Activated CD4-positive, alpha-beta memory T cell treated with anti-CD3 and anti-CD28 coated beads for 36 hours (primary cell): ENCODE measurements at regions of chr17 and their contacts with region 1.

Region 1: GRCh38 chr17:4143563-4144421 is 795 bp downstream of the CYB5D2 start:
- DNase-seq: peak; percentile 93
- H3K4me3 Mint-ChIP-seq: peak overlapping the region; percentile 96
- H3K27ac Mint-ChIP-seq: peak overlapping the region; percentile 99
- H3K4me1 Mint-ChIP-seq: peaks cover 40% of the 10 kb centered on the region
- H3K27me3 Mint-ChIP-seq: no peaks in the 10 kb centered on the region

Region 2: DNA sequence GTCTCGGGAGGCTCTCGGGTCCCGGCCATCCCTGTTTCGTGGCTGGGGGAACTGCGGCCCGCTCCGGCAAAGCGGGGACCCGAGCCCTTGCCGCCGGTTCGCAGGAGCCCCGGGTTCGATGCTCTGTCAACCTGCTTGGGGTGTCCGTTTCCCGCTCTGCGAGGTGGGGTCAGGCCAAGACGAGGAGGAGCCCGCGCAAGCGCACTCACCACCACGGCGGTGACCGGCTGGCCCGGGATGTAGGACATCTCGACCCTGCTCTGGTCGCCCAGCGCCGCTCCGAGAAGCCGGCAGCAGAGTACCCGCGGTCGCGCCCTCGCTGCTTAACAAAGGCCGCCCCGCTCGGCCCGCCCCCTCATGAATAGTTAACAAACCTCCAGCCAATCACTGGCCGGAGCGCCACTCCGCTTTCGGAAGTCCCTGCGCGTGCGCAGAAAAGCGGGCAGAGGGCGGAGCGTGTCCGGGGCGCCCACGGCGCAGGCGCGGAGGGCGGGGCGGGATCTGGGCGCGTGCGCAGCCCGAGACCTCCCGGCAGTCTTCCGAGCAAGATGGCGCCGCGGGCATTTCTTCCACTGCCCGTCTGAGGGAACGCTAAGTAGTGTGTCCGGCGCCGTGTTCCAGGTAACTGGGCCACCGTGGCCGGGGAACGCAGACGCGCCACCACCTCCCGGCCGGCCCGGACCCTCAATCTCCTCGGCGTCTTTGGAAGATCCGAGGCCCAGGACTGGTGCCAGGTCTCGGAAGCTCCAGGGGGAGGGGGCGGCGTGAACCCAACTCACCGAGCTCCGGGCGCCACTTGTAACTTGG is 475.3 kb before region 1 on chr17 and contains the starts of genes EMC6 and TAX1BP3:
- CTCF ChIA-PET with region 1: no interaction called
- POLR2A ChIA-PET with region 1: no interaction called
- intact Hi-C with region 1: no loop called
- DNase-seq: peak; percentile 99
- H3K4me3 Mint-ChIP-seq: peak within 1 kb of the TSS; percentile 94
- H3K27ac Mint-ChIP-seq: peak within 1 kb of the TSS; percentile 72
- H3K4me1 Mint-ChIP-seq: peaks cover 17% of the 10 kb centered on the region
- H3K27me3 Mint-ChIP-seq: no peaks in the 10 kb centered on the region
- total RNA-seq, gene EMC6: 49.3 to 55.4 TPM
- total RNA-seq, gene TAX1BP3: 23.7 to 24.5 TPM

Region 3: DNA sequence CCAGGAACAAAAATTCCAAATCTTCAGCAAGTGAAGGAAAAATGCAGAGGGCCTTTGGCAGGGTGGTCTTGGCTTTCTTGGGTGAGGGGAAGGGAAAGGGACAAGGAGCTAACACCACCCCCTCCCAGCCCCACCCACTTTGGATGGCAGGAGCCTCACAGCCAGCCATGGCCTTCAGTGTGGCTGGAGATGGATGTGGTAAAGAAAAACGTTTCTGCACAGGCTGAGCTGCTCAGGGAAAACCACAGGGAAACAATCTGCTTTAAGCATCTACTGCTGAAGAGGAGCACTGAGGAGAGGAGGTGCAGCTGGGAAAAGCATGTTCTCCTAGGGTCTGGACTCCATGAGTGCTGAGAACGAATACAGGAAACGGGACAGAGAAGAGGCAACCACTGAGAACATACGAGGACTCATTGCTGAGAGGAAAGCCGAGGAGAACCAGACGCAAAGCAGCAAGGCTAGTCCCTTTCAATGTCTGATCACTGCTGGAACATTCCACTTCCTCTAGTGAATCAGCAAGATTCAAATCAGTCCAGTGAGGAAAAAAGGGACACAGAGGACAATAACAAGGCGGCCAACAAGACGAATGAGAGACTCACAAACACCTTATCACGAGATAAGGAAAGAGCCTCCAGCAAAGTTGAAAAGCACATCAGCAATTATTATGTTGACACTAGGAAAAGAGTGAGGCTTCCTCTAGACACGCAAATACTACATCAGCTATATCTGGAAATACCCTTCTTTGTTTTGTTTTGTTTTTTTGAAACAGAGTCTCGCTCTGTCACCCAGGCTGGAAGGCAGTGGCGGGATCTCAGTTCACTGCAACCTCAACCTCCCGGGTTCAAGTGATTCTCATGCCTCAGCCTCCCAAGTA is 42.7 kb before region 1 on chr17:
- CTCF ChIA-PET with region 1: no interaction called
- POLR2A ChIA-PET with region 1: interaction called, 12 read pairs
- intact Hi-C with region 1: no loop called
- DNase-seq: peak; percentile 25
- H3K4me3 Mint-ChIP-seq: peak overlapping the region; percentile 5
- H3K27ac Mint-ChIP-seq: peak overlapping the region; percentile 73
- H3K4me1 Mint-ChIP-seq: peaks cover 22% of the 10 kb centered on the region
- H3K27me3 Mint-ChIP-seq: no peaks in the 10 kb centered on the region

Region 4: GRCh38 chr17:4161179-4161559 is 17.4 kb after region 1 on chr17:
- CTCF ChIA-PET with region 1: interaction called, 3 read pairs
- POLR2A ChIA-PET with region 1: interaction called, 24 read pairs
- intact Hi-C with region 1: no loop called
- DNase-seq: no peak
- H3K4me3 Mint-ChIP-seq: no peak overlapping the region
- H3K27ac Mint-ChIP-seq: peak overlapping the region; percentile 59
- H3K4me1 Mint-ChIP-seq: peaks cover 10% of the 10 kb centered on the region
- H3K27me3 Mint-ChIP-seq: no peaks in the 10 kb centered on the region

Region 5: GRCh38 chr17:4366327-4367063 is 222.7 kb after region 1 on chr17 and contains the start of gene UBE2G1:
- CTCF ChIA-PET with region 1: no interaction called
- POLR2A ChIA-PET with region 1: no interaction called
- intact Hi-C with region 1: loop called (anchors 1 kb)
- DNase-seq: peak; percentile 100
- H3K4me3 Mint-ChIP-seq: peak within 1 kb of the TSS; percentile 73
- H3K27ac Mint-ChIP-seq: peak within 1 kb of the TSS; percentile 91
- H3K4me1 Mint-ChIP-seq: peaks cover 33% of the 10 kb centered on the region
- H3K27me3 Mint-ChIP-seq: no peaks in the 10 kb centered on the region
- total RNA-seq, gene UBE2G1: 54.4 to 57.6 TPM

Region 6: GRCh38 chr17:4709794-4710692 is 566.3 kb after region 1 on chr17 and contains the start of gene ARRB2:
- CTCF ChIA-PET with region 1: no interaction called
- POLR2A ChIA-PET with region 1: no interaction called
- intact Hi-C with region 1: loop called (anchors 10 kb)
- DNase-seq: peak; percentile 99
- H3K4me3 Mint-ChIP-seq: peak within 1 kb of the TSS; percentile 98
- H3K27ac Mint-ChIP-seq: peak within 1 kb of the TSS; percentile 94
- H3K4me1 Mint-ChIP-seq: peaks cover 55% of the 10 kb centered on the region
- H3K27me3 Mint-ChIP-seq: no peaks in the 10 kb centered on the region
- total RNA-seq, gene ARRB2: 210 to 226 TPM